Activated B cell treated with CpG ODN at 0.5 μM for 24 hours (primary cell): ENCODE measurements at regions of chr3 and their contacts with region 1.

Region 1: GRCh38 chr3:142578327-142579223 is at the start of gene ATR:
- DNase-seq: peak; percentile 92
- ATAC-seq: peak; percentile 95
- H3K4me3 Mint-ChIP-seq: peak within 1 kb of the TSS; percentile 96
- H3K27ac Mint-ChIP-seq: peak within 1 kb of the TSS; percentile 97
- H3K4me1 Mint-ChIP-seq: peaks cover 48% of the 10 kb centered on the region
- H3K27me3 Mint-ChIP-seq: peaks cover 5% of the 10 kb centered on the region
- CTCF ChIP-seq: no peak
- total RNA-seq, gene ATR: 47.4 and 47.6 TPM in 2 replicates

Region 2: GRCh38 chr3:142028243-142028777 is 550.3 kb before region 1 on chr3:
- CTCF ChIA-PET with region 1: no interaction called
- POLR2A ChIA-PET with region 1: interaction called, 4 read pairs
- intact Hi-C with region 1: loop called (anchors 5 kb)
- DNase-seq: no peak
- ATAC-seq: peak; percentile 87
- H3K4me3 Mint-ChIP-seq: peak overlapping the region; percentile 89
- H3K27ac Mint-ChIP-seq: peak overlapping the region; percentile 66
- H3K4me1 Mint-ChIP-seq: peaks cover 18% of the 10 kb centered on the region
- H3K27me3 Mint-ChIP-seq: no peaks in the 10 kb centered on the region
- CTCF ChIP-seq: no peak

Region 3: DNA sequence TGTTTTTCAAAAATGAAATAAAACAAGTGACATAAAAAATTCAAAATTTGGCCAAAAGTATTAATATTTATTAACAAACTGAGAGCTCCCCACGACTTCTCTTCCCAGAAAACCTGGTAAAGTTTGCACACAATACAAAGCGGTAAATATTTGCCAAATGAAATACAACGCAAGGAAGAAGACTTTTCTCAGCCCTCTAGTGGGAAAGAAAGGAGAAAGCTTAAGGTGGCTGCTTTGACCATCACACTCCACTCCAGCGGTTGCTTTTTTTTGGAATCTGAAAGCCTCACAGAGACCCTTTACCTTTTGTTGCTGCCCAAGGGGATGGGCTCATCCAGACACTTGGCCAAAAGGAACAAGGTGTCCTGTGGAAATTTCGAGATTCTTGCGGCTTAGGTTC is 352.1 kb before region 1 on chr3:
- CTCF ChIA-PET with region 1: no interaction called
- POLR2A ChIA-PET with region 1: no interaction called
- intact Hi-C with region 1: loop called (anchors 5 kb)
- DNase-seq: no peak
- ATAC-seq: no peak
- H3K4me3 Mint-ChIP-seq: peak overlapping the region; percentile 38
- H3K27ac Mint-ChIP-seq: no peak overlapping the region
- H3K4me1 Mint-ChIP-seq: peaks cover 6% of the 10 kb centered on the region
- H3K27me3 Mint-ChIP-seq: no peaks in the 10 kb centered on the region
- CTCF ChIP-seq: no peak

Region 4: DNA sequence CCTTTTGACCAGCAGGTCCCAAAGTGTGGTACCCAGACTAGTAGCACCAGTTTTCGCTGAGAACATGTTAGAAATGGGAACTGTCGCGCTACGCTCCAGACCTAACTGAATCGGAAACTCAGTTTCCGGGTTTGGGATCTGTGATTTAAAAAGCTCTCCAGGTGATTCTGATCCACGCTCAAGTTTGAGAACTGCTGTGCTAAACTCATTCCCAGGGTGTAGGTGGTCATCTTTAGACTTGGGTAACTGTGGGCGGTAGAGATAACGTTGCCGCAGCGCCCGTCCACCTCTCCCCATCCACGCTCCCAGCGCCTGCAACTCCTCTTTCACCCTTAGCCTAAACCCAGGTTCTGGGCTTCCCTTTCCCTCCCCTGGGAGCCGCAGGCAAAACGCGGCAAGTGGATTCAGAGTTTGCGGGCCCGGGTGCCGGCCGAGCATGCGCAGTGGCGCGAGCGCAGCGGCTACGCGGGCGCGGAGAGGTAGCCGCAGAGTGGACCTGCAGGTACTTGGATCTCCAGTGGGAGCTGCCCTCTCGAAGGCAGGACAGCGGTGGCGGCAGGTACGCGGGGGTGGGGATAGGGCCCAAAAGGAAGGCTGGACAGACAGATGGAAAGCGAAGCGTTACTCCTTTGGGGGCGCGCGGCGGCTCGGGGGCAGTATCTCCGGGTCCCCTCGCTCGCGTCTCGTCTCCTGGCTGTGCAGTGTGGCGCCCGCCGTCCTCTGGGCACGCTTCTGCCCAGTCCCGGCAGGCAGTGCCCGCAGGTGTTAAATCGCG is 17.6 kb after region 1 on chr3 and contains the start of gene PLS1:
- CTCF ChIA-PET with region 1: no interaction called
- POLR2A ChIA-PET with region 1: interaction called, 27 read pairs
- intact Hi-C with region 1: loop called (anchors 1 kb)
- DNase-seq: peak; percentile 89
- ATAC-seq: peak; percentile 84
- H3K4me3 Mint-ChIP-seq: peak within 1 kb of the TSS; percentile 95
- H3K27ac Mint-ChIP-seq: peak within 1 kb of the TSS; percentile 56
- H3K4me1 Mint-ChIP-seq: peaks cover 16% of the 10 kb centered on the region
- H3K27me3 Mint-ChIP-seq: peaks cover 12% of the 10 kb centered on the region
- CTCF ChIP-seq: no peak
- total RNA-seq, gene PLS1: 0.66 and 0.91 TPM in 2 replicates

Region 5: DNA sequence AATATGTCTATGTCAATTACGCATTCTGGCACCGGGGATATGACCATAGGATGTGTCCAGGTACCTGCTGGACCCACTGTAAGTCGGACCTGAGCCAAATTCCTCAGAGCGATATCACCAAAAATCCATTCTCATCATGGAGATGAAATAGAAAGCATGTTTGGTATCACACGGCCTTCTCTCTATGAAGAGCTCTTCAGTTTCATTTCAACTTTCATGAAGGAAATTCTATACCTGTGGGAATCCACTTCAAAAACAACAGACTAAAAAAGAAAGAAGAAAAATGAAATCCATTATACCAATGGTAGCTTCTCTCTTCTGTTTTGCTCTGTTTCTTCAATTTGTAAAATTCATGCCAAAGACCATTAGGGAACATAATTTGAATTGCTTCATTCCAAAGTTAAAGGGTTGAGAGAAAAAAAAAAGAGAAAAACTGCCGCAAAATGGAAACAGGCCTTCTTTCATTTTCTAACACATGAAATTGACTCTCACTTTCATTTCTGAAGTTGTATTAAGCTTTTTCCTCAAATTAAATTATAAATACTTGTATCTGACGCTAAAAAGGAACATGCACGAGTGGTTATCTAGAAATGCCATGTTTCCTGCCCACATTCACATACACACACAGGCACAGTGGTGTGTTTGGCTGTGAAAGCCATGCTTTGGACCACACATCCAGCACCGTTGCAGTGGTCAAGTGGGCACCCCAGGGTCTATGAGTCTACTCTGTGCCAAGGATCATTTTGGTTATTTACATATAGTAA is 1346.1 kb after region 1 on chr3:
- CTCF ChIA-PET with region 1: no interaction called
- POLR2A ChIA-PET with region 1: no interaction called
- intact Hi-C with region 1: loop called (anchors 10 kb)
- DNase-seq: no peak
- ATAC-seq: peak; percentile 69
- H3K4me3 Mint-ChIP-seq: peak overlapping the region; percentile 75
- H3K27ac Mint-ChIP-seq: peak overlapping the region; percentile 91
- H3K4me1 Mint-ChIP-seq: peaks cover 84% of the 10 kb centered on the region
- H3K27me3 Mint-ChIP-seq: no peaks in the 10 kb centered on the region
- CTCF ChIP-seq: no peak

Region 6: DNA sequence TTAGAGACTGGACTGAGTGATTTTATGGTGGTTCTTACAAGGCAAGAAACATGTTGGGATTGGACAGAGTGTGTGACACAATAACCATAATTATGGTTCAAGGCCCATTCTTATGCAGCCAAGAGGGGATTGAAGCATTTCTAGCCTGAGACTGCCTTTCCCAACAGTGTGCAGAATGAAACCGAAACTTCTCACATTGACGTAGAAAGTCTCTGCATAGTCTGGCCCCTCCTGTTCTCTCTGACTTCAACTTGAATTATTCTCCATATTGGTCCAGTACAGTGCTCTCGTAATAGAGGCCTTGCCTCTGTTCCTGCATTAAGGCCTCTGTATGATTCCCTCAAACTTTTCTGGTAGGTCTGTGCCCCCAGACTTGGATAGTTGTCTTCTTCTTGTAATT is 1531.4 kb after region 1 on chr3:
- CTCF ChIA-PET with region 1: no interaction called
- POLR2A ChIA-PET with region 1: no interaction called
- intact Hi-C with region 1: no loop called
- DNase-seq: no peak
- ATAC-seq: no peak
- H3K4me3 Mint-ChIP-seq: no peak overlapping the region
- H3K27ac Mint-ChIP-seq: no peak overlapping the region
- H3K4me1 Mint-ChIP-seq: peaks cover 5% of the 10 kb centered on the region
- H3K27me3 Mint-ChIP-seq: peaks cover 5% of the 10 kb centered on the region
- CTCF ChIP-seq: no peak